Ovary (tissue), 10 donors: ENCODE measurements at regions of chr7 and their contacts with region 1.

Region 1: GRCh38 chr7:66628361-66629140 is at the start of gene KCTD7:
- DNase-seq: peak; percentile 98 to 99 (median 98)
- H3K4me3 ChIP-seq: peak within 1 kb of the TSS; percentile 85
- H3K27ac ChIP-seq: peak within 1 kb of the TSS; percentile 92 to 94
- H3K4me1 ChIP-seq: peaks cover 9% of the 10 kb centered on the region
- H3K27me3 ChIP-seq: no peaks in the 10 kb centered on the region
- CTCF ChIP-seq: no peak
- EP300 ChIP-seq: no peak
- POLR2A ChIP-seq: peak; percentile 99
- total RNA-seq, gene KCTD7: 15.6 to 28.5 (median 22.0) TPM

Region 2: DNA sequence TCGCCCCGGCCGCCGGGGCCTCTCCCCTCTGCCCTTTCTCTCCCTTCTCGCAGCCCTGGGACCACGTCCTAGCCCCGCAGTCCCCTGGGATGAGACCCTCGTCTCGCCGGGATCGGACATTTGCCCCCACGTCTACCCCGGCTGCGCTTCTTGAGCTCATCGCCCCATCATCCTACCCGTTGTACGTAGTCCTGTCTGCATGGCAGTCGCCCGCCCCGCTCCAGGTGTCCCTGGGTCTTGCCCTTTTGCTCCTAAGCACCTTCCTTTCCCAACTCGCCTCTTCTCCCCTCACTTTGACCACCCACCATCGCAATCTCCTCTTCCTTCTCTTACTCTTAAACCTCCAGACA is 422.8 kb before region 1 on chr7:
- intact Hi-C with region 1: no loop called
- DNase-seq: peak in 1 of 5 donors; percentile 35
- H3K4me3 ChIP-seq: peak overlapping the region; percentile 61
- H3K27ac ChIP-seq: peak overlapping the region in 1 of 2 donors; percentile 65
- H3K4me1 ChIP-seq: peaks cover 4% of the 10 kb centered on the region
- H3K27me3 ChIP-seq: no peaks in the 10 kb centered on the region
- CTCF ChIP-seq: no peak
- EP300 ChIP-seq: no peak
- POLR2A ChIP-seq: no peak

Region 3: GRCh38 chr7:66591799-66592596 is 36.6 kb before region 1 on chr7:
- intact Hi-C with region 1: loop called in 1 of 4 experiments (anchors 2 kb)
- DNase-seq: peak; percentile 90 to 94 (median 91)
- H3K4me3 ChIP-seq: peak overlapping the region; percentile 89
- H3K27ac ChIP-seq: peak overlapping the region; percentile 82 to 94
- H3K4me1 ChIP-seq: peaks cover 9% of the 10 kb centered on the region
- H3K27me3 ChIP-seq: no peaks in the 10 kb centered on the region
- CTCF ChIP-seq: no peak
- EP300 ChIP-seq: no peak
- POLR2A ChIP-seq: peak; percentile 96